Gastrocnemius medialis (tissue), 4 donors: ENCODE measurements at regions of chr10 and their contacts with region 1.

Region 1: DNA sequence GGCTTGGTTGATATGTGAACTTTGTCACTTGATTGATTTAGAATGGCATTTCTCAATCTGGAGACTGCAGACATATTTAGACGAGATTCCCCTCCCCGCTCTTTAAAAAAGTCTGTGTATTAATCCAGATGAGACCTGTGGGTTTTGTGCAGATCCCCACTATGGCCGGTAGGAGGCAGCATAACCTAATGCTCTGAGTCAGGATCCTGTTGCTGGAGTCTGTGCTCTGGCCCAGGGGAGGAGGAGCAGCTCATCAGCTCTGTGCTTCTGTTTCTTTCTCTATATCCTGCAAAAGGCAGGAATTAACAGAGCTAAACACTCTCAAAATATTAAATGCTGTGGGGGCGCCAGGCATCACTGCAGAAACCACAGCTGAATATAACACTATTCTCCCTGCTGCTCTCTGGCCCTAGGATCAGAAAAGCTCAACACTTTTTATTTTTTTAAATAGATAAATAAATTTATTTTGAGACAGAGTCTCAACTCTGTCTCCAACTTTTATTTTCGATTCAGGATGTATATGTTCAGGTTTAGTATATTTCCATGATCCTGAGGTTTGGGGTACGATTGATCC is 23.9 kb upstream of the SEPHS1 start:
- DNase-seq: peak; percentile 29 to 46
- ATAC-seq: peak; percentile 79 to 91
- H3K4me3 ChIP-seq: no peak overlapping the region
- H3K27ac ChIP-seq: no peak overlapping the region
- H3K4me1 ChIP-seq: no peaks in the 10 kb centered on the region
- H3K27me3 ChIP-seq: peaks cover 0 to 2% (median 0%) of the 10 kb centered on the region in 3 donors
- CTCF ChIP-seq: peak; percentile 59 to 88 (median 83)
- POLR2A ChIP-seq: no peak

Region 2: DNA sequence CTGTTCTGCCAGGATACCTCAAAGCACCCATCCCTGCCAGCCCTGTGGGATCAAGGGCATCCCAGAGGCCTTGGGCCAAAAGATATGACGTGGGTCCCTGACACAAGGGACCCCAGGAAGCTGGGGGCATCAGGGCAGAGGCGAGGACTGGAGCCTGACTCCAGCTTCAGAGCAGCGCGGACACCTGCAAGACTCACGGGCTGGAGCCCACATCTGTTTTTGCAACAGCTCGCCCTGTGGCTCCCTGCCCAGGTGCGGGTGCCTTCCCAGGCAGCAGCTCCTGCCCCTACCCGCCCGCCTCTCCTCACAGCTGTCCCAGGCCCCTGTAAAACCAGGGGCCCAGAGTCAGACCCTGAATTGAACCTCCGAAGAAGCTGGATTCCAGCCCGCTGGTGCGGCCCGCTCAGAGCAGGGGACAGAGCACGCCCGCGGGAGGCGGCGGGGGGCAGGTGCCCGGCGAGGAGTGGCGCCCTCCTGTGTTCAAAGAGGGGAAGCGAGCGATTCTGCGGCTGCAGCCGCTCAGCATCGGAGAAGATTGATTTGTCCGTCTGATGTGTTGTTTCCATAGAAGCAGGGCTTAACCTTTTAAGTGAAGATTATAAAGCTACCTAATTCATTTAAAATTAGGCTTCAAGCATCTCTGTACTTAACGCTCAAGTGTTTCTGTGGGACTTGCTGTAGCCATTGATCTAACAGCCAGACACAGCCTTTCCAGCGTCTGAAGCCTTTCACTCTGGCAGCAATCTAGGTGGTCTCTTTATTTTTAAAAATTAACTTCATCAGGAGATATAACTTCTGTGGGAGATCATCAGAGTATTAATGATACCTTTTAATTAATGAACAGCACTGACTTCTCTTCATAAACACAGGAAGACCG is 68.4 kb after region 1 on chr10:
- in situ Hi-C with region 1: loop called in 1 of 4 experiments (anchors 5 kb)
- intact Hi-C with region 1: loop called (anchors 1 kb)
- DNase-seq: peak in 1 of 2 donors; percentile 18
- ATAC-seq: peak; percentile 60 to 82
- H3K4me3 ChIP-seq: peak overlapping the region; percentile 35 to 53 (median 46)
- H3K27ac ChIP-seq: no peak overlapping the region
- H3K4me1 ChIP-seq: peaks cover 5 to 8% of the 10 kb centered on the region in 2 donors
- H3K27me3 ChIP-seq: peaks cover 0 to 23% (median 9%) of the 10 kb centered on the region in 3 donors
- CTCF ChIP-seq: peak; percentile 51 to 92 (median 76)
- POLR2A ChIP-seq: no peak

Region 3: GRCh38 chr10:13448216-13448615 is 76.2 kb after region 1 on chr10:
- in situ Hi-C with region 1: loop called in 1 of 4 experiments (anchors 5 kb)
- intact Hi-C with region 1: no loop called
- DNase-seq: no peak
- ATAC-seq: no peak
- H3K4me3 ChIP-seq: no peak overlapping the region
- H3K27ac ChIP-seq: no peak overlapping the region
- H3K4me1 ChIP-seq: no peaks in the 10 kb centered on the region
- H3K27me3 ChIP-seq: no peaks in the 10 kb centered on the region
- CTCF ChIP-seq: no peak
- POLR2A ChIP-seq: no peak

Region 4: GRCh38 chr10:13536674-13537366 is 164.8 kb after region 1 on chr10:
- in situ Hi-C with region 1: loop called in 1 of 4 experiments (anchors 25 kb)
- intact Hi-C with region 1: no loop called
- DNase-seq: no peak
- ATAC-seq: no peak
- H3K4me3 ChIP-seq: no peak overlapping the region
- H3K27ac ChIP-seq: no peak overlapping the region
- H3K4me1 ChIP-seq: no peaks in the 10 kb centered on the region
- H3K27me3 ChIP-seq: peaks cover 0 to 5% (median 0%) of the 10 kb centered on the region in 3 donors
- CTCF ChIP-seq: peak in 2 of 5 experiments; percentile 39 to 49
- POLR2A ChIP-seq: no peak

Region 5: DNA sequence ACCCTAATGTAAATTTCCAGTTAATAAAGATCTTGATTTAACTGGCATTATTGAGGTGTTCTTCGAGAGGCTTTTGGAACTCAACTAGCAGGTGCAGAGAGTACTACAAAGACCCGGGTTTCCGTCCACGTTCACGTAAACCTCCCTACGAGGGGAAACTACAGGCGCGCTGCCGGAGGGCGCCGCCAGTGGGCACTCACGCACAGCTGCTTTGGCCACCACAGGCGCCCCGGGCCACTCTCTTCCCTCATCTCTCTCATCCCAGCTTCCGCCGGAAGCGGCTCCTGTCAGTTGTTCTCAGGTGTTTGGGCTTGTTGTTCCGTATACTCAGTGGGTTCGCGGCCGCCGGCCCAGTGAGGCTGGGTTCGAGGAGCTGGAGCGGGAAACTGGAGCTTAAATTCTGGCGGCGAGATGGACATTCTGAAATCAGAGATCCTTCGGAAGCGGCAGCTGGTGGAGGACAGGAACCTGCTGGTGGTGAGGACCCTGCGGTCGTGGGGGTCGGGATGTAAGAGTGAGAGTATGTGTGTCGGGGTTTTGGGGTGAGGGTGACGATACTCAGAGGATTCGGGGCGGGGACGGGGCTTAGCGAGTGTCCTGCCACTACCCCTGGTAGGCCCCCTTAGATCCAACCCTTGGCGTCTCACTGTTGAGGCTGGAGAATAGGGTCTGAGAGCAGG is 214.8 kb after region 1 on chr10 and contains the start of gene PRPF18:
- in situ Hi-C with region 1: loop called in 1 of 4 experiments (anchors 25 kb)
- intact Hi-C with region 1: loop called (anchors 5 kb)
- DNase-seq: peak; percentile 86 to 92
- ATAC-seq: peak; percentile 99 to 100
- H3K4me3 ChIP-seq: peak within 1 kb of the TSS; percentile 85 to 95 (median 91)
- H3K27ac ChIP-seq: peak within 1 kb of the TSS; percentile 77 to 88 (median 82)
- H3K4me1 ChIP-seq: peaks cover 20 to 25% of the 10 kb centered on the region in 2 donors
- H3K27me3 ChIP-seq: peaks cover 0 to 5% (median 0%) of the 10 kb centered on the region in 3 donors
- CTCF ChIP-seq: peak; percentile 88 to 98 (median 95)
- POLR2A ChIP-seq: peak; percentile 31 to 55
- total RNA-seq, gene PRPF18: 21.3 to 35.4 (median 28.1) TPM

Region 6: DNA sequence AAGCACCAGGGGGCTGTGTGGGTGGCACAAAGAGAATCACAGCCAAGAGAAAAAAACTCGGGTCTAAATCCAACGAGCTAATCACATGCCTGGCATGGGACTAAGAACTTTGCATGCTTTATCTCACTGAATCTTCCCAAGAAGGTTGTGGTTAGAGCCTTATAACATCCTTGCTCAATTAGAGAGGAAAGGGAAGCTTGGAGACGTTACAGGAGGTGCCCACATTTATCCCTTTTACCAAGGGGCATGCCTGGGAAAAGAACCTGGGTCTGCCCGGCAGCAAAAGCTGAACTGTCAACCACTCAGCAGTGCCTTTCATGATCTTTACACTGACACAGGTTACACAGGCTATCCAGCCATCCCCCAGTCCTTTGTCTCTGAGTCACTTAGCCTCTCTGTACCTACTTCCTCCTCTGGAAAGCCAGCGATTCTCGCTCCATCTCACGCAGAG is 404.9 kb after region 1 on chr10:
- in situ Hi-C with region 1: no loop called
- intact Hi-C with region 1: loop called (anchors 5 kb)
- DNase-seq: no peak
- ATAC-seq: no peak
- H3K4me3 ChIP-seq: no peak overlapping the region
- H3K27ac ChIP-seq: no peak overlapping the region
- H3K4me1 ChIP-seq: peaks cover 4 to 8% of the 10 kb centered on the region in 2 donors
- H3K27me3 ChIP-seq: no peaks in the 10 kb centered on the region
- CTCF ChIP-seq: no peak
- POLR2A ChIP-seq: no peak